ENCODE measurements at regions of chr1 and their contacts with region 1.

Region 1: GRCh38 chr1:165933446-165934178 is 106.2 kb downstream of the UCK2 start:
- DNase-seq: no peak
- ATAC-seq: no peak
- H3K4me3 ChIP-seq: no peak overlapping the region
- H3K27ac ChIP-seq: no peak overlapping the region
- H3K4me1 ChIP-seq: no peaks in the 10 kb centered on the region
- H3K27me3 ChIP-seq: no peaks in the 10 kb centered on the region

Region 2: GRCh38 chr1:165842671-165843129 is 90.9 kb before region 1 on chr1:
- intact Hi-C with region 1: no loop called
- DNase-seq: no peak
- ATAC-seq: peak; percentile 40 to 70
- H3K4me3 ChIP-seq: no peak overlapping the region
- H3K27ac ChIP-seq: no peak overlapping the region
- H3K4me1 ChIP-seq: peaks cover 6% of the 10 kb centered on the region
- H3K27me3 ChIP-seq: no peaks in the 10 kb centered on the region

Region 3: DNA sequence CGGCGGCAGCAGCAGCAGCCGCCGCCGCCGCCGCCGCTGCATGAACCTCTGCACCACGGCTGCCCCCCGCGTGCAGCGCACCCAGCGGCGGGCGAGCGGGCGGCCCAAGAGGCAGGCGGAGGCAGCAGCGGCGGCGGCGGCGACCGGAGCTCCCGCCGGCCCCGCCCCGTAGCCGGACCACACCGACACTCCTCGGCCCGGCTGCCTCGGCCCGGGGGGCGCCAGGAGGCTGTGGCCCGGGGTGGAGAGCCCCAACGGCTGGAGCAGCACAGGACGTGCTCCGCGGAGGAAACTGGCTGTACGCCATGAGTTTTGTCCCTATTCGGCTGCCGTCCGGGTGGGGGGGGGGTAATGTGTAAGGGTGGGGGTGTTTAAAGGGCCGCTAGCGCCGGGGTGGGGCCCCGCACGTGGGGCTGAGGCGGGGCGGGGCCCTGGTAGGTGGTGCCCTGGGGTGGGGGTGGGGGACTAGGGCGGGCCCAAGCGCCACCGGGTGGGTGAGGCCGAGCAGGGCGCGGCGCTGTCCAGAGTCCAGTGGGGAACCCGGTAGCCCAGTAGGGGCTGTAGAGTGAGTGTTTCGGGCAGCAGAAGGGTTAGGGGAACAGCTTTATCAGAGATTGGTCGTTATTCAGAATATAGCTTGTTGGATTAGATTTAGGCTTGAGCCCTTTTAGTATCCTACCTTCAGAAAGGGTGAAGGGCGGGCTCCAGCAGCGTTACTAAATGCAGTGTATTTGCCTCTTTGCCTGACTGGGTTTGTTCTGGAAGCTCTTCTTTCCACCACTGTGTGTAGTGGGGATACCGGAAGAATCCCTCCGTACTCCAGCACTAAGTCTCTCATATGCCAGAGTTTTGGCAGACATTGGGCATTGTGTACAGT is 233.3 kb after region 1 on chr1 and contains the start of gene FAM78B:
- intact Hi-C with region 1: loop called in 1 of 4 experiments (anchors 5 kb)
- DNase-seq: peak; percentile 80 to 92 (median 88)
- ATAC-seq: peak; percentile 95 to 96
- H3K4me3 ChIP-seq: peak within 1 kb of the TSS; percentile 65
- H3K27ac ChIP-seq: peak within 1 kb of the TSS; percentile 14
- H3K4me1 ChIP-seq: peaks cover 3% of the 10 kb centered on the region
- H3K27me3 ChIP-seq: no peaks in the 10 kb centered on the region
- total RNA-seq, gene FAM78B: 3.7 to 4.9 (median 4.4) TPM

Region 4: GRCh38 chr1:166283190-166283589 is 349.6 kb after region 1 on chr1:
- intact Hi-C with region 1: no loop called
- DNase-seq: no peak
- ATAC-seq: no peak
- H3K4me3 ChIP-seq: no peak overlapping the region
- H3K27ac ChIP-seq: no peak overlapping the region
- H3K4me1 ChIP-seq: peaks cover 1% of the 10 kb centered on the region
- H3K27me3 ChIP-seq: no peaks in the 10 kb centered on the region

Measured in right cardiac atrium (tissue), 5 donors.